Transverse colon (tissue), 4 donors: ENCODE measurements at regions of chr5 and their contacts with region 1.

Region 1: GRCh38 chr5:56496581-56497063 is 263.5 kb upstream of the ANKRD55 start:
- DNase-seq: no peak
- H3K4me3 ChIP-seq: no peak overlapping the region
- H3K27ac ChIP-seq: no peak overlapping the region
- H3K4me1 ChIP-seq: no peaks in the 10 kb centered on the region
- H3K27me3 ChIP-seq: no peaks in the 10 kb centered on the region
- CTCF ChIP-seq: no peak
- EP300 ChIP-seq: no peak
- POLR2A ChIP-seq: no peak

Region 2: GRCh38 chr5:56517011-56517416 is 20.4 kb after region 1 on chr5:
- in situ Hi-C with region 1: no loop called
- intact Hi-C with region 1: no loop called
- DNase-seq: no peak
- H3K4me3 ChIP-seq: no peak overlapping the region
- H3K27ac ChIP-seq: no peak overlapping the region
- H3K4me1 ChIP-seq: peaks cover 0 to 5% (median 0%) of the 10 kb centered on the region in 4 donors
- H3K27me3 ChIP-seq: no peaks in the 10 kb centered on the region
- CTCF ChIP-seq: no peak
- EP300 ChIP-seq: no peak
- POLR2A ChIP-seq: no peak

Region 3: DNA sequence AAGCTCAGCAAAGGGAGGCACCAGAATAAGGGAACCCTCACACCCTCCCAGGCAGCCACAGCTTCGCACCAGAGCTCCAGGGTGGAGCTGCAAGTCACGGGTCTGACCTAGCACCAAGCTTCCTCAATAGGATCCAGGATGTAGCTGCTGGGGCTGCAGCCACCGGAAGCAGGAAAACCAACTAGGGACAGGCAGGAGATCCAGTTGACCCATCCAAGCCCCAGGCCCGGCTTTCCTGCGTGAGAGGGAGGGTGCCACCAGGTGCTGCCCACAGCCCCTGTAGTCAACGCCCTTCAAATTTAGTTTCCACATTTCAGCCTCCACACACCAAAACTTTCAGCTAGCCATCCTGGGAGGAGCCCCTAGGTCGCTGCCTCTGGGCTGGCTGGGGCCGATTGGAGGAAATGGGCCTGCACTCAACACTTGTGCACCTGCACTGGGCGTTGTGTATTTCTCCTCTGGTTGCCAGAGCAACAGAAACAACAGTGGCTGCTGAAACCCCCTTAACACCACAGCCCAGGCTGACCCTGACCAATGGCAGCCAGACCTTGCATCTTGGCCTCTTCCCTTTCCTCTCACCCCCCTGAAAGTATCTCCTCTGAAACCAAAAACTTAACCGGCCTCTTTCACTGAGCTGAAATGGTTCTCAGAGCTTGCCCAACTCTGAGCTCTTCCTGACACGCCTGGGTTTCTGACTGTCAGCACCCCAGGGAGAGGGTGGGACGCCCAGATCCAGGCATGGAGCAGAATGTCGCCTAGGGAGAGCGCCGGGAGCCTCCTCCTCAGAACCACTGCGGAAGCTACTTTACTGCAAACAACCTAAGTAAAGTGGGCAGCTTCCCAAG is 92.2 kb after region 1 on chr5:
- in situ Hi-C with region 1: no loop called
- intact Hi-C with region 1: loop called (anchors 5 kb)
- DNase-seq: peak; percentile 78
- H3K4me3 ChIP-seq: no peak overlapping the region
- H3K27ac ChIP-seq: peak overlapping the region; percentile 39 to 50 (median 43)
- H3K4me1 ChIP-seq: peaks cover 0 to 15% (median 3%) of the 10 kb centered on the region in 4 donors
- H3K27me3 ChIP-seq: no peaks in the 10 kb centered on the region
- CTCF ChIP-seq: no peak
- EP300 ChIP-seq: no peak
- POLR2A ChIP-seq: no peak